Activated naive CD4-positive, alpha-beta T cell treated with anti-CD3 and anti-CD28 coated beads for 36 hours (primary cell): ENCODE measurements at regions of chr3 and their contacts with region 1.

Region 1: DNA sequence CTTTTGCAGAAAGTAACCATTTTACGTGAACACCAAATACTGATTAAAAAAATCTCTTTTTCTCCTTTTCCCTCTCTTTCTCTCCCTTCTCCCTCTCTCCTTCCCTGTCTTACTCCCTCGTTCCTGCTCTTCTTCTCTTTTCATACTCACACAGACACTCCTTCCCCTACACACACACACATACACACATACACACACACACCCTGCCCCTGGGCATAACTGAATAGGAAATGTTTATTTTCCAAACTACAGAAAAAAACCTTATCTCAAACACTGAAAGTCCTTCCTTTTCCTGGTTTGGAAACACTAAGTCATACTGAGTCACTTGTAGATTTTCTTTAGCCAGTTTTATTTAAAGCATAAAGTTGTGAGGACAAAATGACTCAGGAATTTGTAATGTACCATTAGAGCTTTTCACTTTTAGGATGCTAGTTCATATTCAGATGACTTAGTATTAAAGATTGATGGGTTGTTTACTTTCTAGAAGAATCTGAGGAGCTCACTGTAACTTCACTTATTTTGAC is 62.4 kb downstream of the MBNL1 start:
- DNase-seq: no peak
- H3K4me3 Mint-ChIP-seq: peak overlapping the region; percentile 22
- H3K27ac Mint-ChIP-seq: peak overlapping the region; percentile 84
- H3K4me1 Mint-ChIP-seq: peaks cover 87% of the 10 kb centered on the region
- H3K27me3 Mint-ChIP-seq: no peaks in the 10 kb centered on the region

Region 2: GRCh38 chr3:152087153-152087552 is 243.9 kb before region 1 on chr3:
- CTCF ChIA-PET with region 1: no interaction called
- intact Hi-C with region 1: no loop called
- DNase-seq: no peak
- H3K4me3 Mint-ChIP-seq: no peak overlapping the region
- H3K27ac Mint-ChIP-seq: no peak overlapping the region
- H3K4me1 Mint-ChIP-seq: peaks cover 3% of the 10 kb centered on the region
- H3K27me3 Mint-ChIP-seq: peaks cover 2% of the 10 kb centered on the region

Region 3: DNA sequence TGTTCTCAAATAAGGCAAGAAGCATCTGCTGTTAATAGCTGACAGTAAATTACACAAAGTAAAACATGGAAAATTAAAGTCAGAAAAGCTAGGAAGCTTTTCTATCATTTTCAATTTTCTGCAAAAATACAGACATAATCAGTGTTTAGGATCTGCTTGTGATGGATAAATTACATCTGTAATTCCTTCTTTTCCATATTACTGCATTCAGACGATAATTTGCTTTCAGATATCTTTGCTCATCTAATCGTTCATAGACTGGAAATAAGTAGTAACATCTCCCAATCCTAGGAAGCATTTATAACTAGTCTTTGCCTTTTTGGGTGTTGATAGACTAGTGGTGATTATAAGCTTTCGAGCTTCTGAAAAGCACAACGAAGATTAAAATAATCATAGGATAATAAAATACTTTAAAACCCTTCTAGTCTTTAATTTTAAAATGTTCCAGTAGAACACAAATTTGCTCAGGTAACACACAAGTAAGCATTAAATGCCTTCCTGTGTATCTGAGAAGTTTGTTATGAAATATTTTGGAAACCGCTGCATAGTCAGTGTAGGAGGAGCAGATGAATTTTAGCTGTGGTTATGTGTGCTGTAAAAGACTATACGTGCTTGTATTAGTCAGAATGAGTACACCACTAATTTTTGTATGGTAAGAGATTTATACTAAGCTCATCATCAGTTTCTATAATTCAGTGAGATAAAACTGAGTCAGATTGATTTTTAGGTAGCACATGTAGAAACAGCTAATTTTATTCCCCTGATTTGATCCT is 21.4 kb before region 1 on chr3:
- CTCF ChIA-PET with region 1: no interaction called
- intact Hi-C with region 1: loop called (anchors 1 kb)
- DNase-seq: no peak
- H3K4me3 Mint-ChIP-seq: no peak overlapping the region
- H3K27ac Mint-ChIP-seq: peak overlapping the region; percentile 21
- H3K4me1 Mint-ChIP-seq: peaks cover 81% of the 10 kb centered on the region
- H3K27me3 Mint-ChIP-seq: no peaks in the 10 kb centered on the region

Region 4: GRCh38 chr3:152349392-152349791 is 18.3 kb after region 1 on chr3:
- CTCF ChIA-PET with region 1: interaction called, 3 read pairs
- intact Hi-C with region 1: loop called (anchors 2 kb)
- DNase-seq: no peak
- H3K4me3 Mint-ChIP-seq: no peak overlapping the region
- H3K27ac Mint-ChIP-seq: no peak overlapping the region
- H3K4me1 Mint-ChIP-seq: peaks cover 46% of the 10 kb centered on the region
- H3K27me3 Mint-ChIP-seq: no peaks in the 10 kb centered on the region

Region 5: DNA sequence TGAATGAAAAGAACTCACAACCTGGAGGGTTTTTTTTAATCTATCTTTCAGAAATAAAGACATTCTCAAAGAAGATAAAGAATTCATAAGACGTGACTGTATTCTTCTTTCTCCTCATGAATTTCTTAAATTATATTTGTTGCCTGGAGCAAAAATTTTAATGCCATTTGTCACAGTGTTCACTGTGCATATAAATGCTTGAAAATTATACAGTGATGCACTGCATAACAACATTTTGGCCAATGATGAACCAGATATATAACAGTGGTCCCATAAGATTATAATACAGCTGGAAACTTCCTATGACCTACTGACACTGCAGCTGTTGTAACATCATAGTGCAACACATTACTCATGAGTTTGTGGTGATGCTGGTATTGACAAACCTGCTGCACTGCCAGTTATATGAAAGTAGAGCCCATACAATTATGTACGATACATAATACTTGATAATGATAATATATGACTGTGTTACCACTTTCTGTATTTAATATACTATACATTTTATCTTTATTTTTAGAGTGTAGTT is 571.1 kb after region 1 on chr3:
- CTCF ChIA-PET with region 1: no interaction called
- intact Hi-C with region 1: no loop called
- DNase-seq: no peak
- H3K4me3 Mint-ChIP-seq: no peak overlapping the region
- H3K27ac Mint-ChIP-seq: no peak overlapping the region
- H3K4me1 Mint-ChIP-seq: no peaks in the 10 kb centered on the region
- H3K27me3 Mint-ChIP-seq: no peaks in the 10 kb centered on the region

Region 6: DNA sequence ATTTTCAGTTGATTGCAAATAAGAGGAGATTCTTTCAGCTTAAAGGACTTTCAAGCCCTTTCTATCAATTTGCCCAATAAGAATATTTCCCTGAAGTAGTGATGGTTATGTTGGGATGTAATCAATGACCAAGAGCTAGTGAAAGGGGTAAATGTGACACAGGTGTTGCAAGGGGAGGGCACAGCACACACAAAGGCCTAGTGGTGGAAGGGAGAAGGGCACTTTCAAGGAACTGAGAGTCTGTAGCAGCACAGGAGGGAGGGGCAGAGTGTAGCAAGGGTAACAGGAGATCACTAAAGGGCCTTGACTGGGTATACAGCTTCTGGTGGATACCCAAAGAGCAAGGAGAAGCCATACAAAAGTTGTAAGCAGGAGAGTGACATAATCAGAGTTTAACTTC is 1572.3 kb after region 1 on chr3:
- CTCF ChIA-PET with region 1: no interaction called
- intact Hi-C with region 1: no loop called
- DNase-seq: no peak
- H3K4me3 Mint-ChIP-seq: no peak overlapping the region
- H3K27ac Mint-ChIP-seq: no peak overlapping the region
- H3K4me1 Mint-ChIP-seq: no peaks in the 10 kb centered on the region
- H3K27me3 Mint-ChIP-seq: peaks cover 4% of the 10 kb centered on the region